ENCODE measurements at regions of chr18 and their contacts with region 1.

Region 1: GRCh38 chr18:32714571-32715148 is 58.2 kb downstream of the KLHL14 start:
- DNase-seq: no peak
- ATAC-seq: peak; percentile 98
- H3K4me3 Mint-ChIP-seq: no peak overlapping the region
- H3K27ac Mint-ChIP-seq: no peak overlapping the region
- H3K4me1 Mint-ChIP-seq: peaks cover 22% of the 10 kb centered on the region
- H3K27me3 Mint-ChIP-seq: no peaks in the 10 kb centered on the region
- CTCF ChIP-seq: peak; percentile 44

Region 2: DNA sequence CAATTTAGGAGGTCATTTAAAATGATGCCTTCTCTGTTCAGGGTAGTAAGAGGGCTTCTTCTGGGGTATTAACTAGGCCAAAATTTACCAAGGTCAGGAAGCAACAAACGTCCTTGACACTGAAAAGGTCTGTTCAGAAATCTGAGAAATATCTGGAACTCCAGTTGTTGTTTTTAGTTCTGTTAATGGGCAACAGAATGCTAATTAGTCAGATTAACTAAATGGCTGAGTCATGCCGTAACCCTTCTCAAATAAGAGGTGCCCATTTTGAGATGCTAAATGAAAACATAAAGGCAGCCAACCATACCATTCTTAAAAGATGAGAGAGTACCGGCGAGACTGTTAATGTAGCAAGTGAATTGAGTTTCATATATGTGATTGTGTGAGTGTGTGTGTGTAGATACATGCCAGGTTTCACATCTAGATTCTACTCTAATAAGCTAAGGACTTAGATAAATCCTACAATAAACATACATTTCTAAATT is 96.1 kb before region 1 on chr18:
- CTCF ChIA-PET with region 1: no interaction called
- POLR2A ChIA-PET with region 1: no interaction called
- intact Hi-C with region 1: no loop called
- DNase-seq: no peak
- ATAC-seq: no peak
- H3K4me3 Mint-ChIP-seq: no peak overlapping the region
- H3K27ac Mint-ChIP-seq: no peak overlapping the region
- H3K4me1 Mint-ChIP-seq: no peaks in the 10 kb centered on the region
- H3K27me3 Mint-ChIP-seq: no peaks in the 10 kb centered on the region
- CTCF ChIP-seq: no peak

Region 3: DNA sequence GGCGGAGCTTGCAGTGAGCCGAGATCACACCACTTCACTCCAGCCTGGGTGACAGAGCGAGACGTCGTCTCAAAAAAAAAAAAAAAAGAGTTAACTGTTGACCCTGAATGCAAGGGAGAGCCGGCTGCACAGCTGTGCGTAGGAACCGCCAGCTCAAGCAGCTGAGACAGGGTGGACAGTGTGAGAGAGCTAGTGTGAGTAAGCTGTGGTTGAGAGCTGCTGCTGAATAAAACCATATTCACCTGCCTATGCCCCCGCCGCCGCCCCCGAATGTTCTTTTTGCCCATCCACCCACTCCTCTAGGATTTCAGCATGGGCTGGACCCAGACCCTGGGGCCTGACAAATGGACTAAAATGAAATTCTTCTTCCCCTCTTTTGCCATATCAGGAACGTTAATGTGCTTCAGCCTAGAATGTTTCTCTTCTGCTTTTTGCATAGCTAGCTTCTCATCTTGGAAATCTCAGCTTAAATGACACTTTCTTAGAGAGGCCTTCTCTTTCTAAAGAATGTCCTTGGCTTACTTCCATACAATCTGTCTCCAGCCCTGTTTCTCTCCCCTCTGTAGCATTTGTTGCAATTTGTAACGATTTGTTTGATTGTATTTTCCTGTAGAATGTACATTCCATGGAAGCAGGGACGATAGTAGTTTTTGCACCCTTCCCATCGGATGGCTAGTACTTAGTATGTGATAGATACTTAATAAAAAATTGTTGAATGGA is 84.5 kb before region 1 on chr18:
- CTCF ChIA-PET with region 1: no interaction called
- POLR2A ChIA-PET with region 1: no interaction called
- intact Hi-C with region 1: no loop called
- DNase-seq: no peak
- ATAC-seq: no peak
- H3K4me3 Mint-ChIP-seq: no peak overlapping the region
- H3K27ac Mint-ChIP-seq: no peak overlapping the region
- H3K4me1 Mint-ChIP-seq: no peaks in the 10 kb centered on the region
- H3K27me3 Mint-ChIP-seq: peaks cover 16% of the 10 kb centered on the region
- CTCF ChIP-seq: no peak

Region 4: GRCh38 chr18:32730620-32731091 is 16.0 kb after region 1 on chr18:
- CTCF ChIA-PET with region 1: interaction called, 8 read pairs
- POLR2A ChIA-PET with region 1: no interaction called
- intact Hi-C with region 1: loop called (anchors 1 kb)
- DNase-seq: no peak
- ATAC-seq: peak; percentile 88
- H3K4me3 Mint-ChIP-seq: peak overlapping the region; percentile 72
- H3K27ac Mint-ChIP-seq: peak overlapping the region; percentile 86
- H3K4me1 Mint-ChIP-seq: peaks cover 50% of the 10 kb centered on the region
- H3K27me3 Mint-ChIP-seq: no peaks in the 10 kb centered on the region
- CTCF ChIP-seq: no peak

Region 5: DNA sequence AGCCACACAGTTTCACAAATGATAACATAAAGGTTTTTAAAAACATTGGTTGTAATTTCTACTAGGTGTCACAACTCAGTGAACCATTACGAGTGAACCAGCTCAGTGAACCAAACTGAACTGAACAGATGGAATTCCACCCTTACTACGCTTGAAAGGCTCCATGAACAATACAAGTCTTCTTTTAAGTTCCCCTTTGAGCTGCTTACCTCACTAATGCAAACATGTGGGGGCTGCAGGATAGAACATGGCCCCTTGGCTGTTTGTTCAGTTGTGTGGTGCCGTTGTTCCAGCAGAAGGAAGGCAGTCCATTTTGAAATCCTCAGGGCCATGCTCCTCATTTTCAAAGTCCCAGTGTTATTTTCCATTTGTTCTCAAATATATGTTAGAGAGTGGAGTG is 88.9 kb after region 1 on chr18:
- CTCF ChIA-PET with region 1: interaction called, 10 read pairs
- POLR2A ChIA-PET with region 1: no interaction called
- intact Hi-C with region 1: no loop called
- DNase-seq: no peak
- ATAC-seq: peak; percentile 88
- H3K4me3 Mint-ChIP-seq: peak overlapping the region; percentile 75
- H3K27ac Mint-ChIP-seq: peak overlapping the region; percentile 98
- H3K4me1 Mint-ChIP-seq: peaks cover 53% of the 10 kb centered on the region
- H3K27me3 Mint-ChIP-seq: no peaks in the 10 kb centered on the region
- CTCF ChIP-seq: no peak

Region 6: GRCh38 chr18:32884543-32884942 is 169.9 kb after region 1 on chr18:
- CTCF ChIA-PET with region 1: interaction called, 3 read pairs
- POLR2A ChIA-PET with region 1: no interaction called
- intact Hi-C with region 1: loop called (anchors 1 kb)
- DNase-seq: peak; percentile 51
- ATAC-seq: peak; percentile 99
- H3K4me3 Mint-ChIP-seq: peak overlapping the region; percentile 53
- H3K27ac Mint-ChIP-seq: peak overlapping the region; percentile 89
- H3K4me1 Mint-ChIP-seq: peaks cover 86% of the 10 kb centered on the region
- H3K27me3 Mint-ChIP-seq: no peaks in the 10 kb centered on the region
- CTCF ChIP-seq: no peak

Region 7: GRCh38 chr18:32930695-32931301 is 216.1 kb after region 1 on chr18:
- CTCF ChIA-PET with region 1: interaction called, 27 read pairs
- POLR2A ChIA-PET with region 1: interaction called, 3 read pairs
- intact Hi-C with region 1: loop called (anchors 1 kb)
- DNase-seq: no peak
- ATAC-seq: peak; percentile 100
- H3K4me3 Mint-ChIP-seq: no peak overlapping the region
- H3K27ac Mint-ChIP-seq: no peak overlapping the region
- H3K4me1 Mint-ChIP-seq: peaks cover 2% of the 10 kb centered on the region
- H3K27me3 Mint-ChIP-seq: peaks cover 2% of the 10 kb centered on the region
- CTCF ChIP-seq: no peak

Region 8: DNA sequence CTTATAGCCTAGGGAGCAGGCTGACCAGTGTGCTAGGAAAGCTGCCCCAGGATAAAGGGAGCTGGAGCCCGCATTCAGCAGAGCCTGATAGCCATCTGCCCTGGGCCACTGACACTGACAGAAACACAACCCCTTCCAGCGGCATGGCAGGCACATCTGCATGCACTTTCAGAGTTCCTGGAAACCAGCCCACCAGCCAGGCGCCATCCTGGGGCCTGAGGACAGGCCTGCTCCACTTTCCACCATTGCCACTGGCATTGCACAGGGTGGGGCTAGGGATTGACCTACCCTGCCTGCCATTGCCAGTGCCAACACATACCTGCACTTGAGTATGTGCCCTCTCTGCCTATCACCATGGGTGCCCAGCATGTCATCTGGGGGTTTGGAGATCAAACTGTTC is 348.3 kb after region 1 on chr18:
- CTCF ChIA-PET with region 1: no interaction called
- POLR2A ChIA-PET with region 1: no interaction called
- intact Hi-C with region 1: no loop called
- DNase-seq: no peak
- ATAC-seq: no peak
- H3K4me3 Mint-ChIP-seq: no peak overlapping the region
- H3K27ac Mint-ChIP-seq: no peak overlapping the region
- H3K4me1 Mint-ChIP-seq: no peaks in the 10 kb centered on the region
- H3K27me3 Mint-ChIP-seq: peaks cover 4% of the 10 kb centered on the region
- CTCF ChIP-seq: no peak